ENCODE measurements at regions of chr13 and their contacts with region 1.

Region 1: DNA sequence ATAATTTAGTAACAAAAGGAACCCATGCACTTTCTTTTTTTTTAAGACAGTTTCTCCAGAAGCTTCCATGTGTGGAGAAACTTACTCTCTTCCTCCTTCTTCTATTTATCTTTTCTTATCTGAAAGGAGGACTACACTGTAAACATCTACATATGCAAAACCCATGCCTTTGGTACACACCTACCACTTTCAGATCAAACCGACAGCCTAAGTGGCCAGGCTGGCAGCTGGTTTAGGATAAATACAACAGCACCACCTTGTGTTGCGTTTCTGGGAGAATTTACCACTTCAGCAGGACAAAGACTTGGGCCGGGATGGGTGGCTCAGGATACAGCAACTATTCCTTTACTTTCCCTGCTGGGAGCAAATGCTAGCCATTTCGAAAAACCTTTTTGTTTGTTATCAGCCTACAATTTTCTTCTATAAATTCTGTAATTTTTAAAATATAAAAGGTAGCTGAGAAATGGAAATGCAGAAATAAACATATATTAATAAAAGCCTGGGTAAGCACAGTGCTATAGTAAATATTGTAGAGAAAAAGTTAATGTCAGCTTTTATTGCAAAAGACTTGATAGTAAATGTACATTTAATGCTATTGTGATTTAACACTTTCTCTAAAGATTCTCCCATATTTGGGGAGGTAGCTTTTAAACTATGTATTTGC is 94.0 kb upstream of the RFC3 start:
- DNase-seq: peak; percentile 94
- H3K4me3 ChIP-seq: no peak overlapping the region
- H3K27ac ChIP-seq: peak overlapping the region; percentile 57 to 67 (median 62)
- H3K4me1 ChIP-seq: peaks cover 37 to 45% (median 42%) of the 10 kb centered on the region in 4 donors
- H3K27me3 ChIP-seq: no peaks in the 10 kb centered on the region
- CTCF ChIP-seq: peak; percentile 71 to 83 (median 77)
- EP300 ChIP-seq: no peak
- POLR2A ChIP-seq: no peak

Region 2: DNA sequence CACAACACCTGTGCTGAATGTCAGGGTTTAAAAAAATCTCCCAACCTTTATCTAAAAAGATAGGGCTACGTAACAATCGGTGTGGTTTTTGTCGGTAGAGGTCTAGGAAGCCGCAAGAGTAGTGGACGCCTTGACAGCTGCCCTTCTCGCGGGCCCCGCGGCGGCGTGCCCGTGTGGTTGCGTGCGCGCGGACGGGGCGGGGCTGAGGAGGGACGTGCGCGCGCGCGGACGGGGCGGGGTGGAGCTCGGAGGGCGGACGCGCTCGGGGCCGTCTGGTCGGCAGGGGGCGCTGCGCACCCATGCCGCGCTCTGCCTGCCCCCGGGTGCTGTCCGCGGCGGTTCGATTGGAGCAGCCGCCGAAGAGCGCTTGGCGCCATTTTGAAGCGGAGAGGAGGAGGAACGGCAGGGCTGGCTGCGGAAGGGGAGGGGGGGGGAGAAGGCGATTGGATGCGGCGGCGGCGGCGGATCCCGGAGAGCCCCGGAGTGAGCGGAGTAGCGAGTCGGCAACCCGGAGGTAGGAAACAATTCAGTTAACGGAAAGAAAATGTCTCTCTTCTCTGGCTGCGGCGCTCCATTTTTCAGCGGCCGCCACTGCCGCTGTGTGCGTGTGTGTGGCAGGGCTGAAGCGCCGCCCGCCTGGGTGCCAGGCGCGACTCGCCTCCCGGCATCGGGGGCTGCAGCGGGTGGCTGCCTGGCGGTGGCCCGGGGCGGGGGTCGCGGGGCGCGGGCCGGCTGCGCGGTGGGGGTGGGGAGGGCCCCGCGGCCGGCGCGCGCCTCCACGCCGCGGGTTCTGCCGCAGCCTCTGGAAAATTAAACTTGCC is 1137.6 kb before region 1 on chr13 and contains the start of gene PDS5B:
- intact Hi-C with region 1: loop called (anchors 5 kb)
- DNase-seq: peak; percentile 98
- H3K4me3 ChIP-seq: peak within 1 kb of the TSS; percentile 76 to 96 (median 82)
- H3K27ac ChIP-seq: peak within 1 kb of the TSS; percentile 92 to 97 (median 94)
- H3K4me1 ChIP-seq: peaks cover 17 to 38% (median 36%) of the 10 kb centered on the region in 4 donors
- H3K27me3 ChIP-seq: no peaks in the 10 kb centered on the region
- CTCF ChIP-seq: peak in 2 of 3 experiments; percentile 95
- EP300 ChIP-seq: no peak
- POLR2A ChIP-seq: peak; percentile 22
- total RNA-seq, gene PDS5B: 33.1 to 58.6 (median 42.4) TPM

Region 3: DNA sequence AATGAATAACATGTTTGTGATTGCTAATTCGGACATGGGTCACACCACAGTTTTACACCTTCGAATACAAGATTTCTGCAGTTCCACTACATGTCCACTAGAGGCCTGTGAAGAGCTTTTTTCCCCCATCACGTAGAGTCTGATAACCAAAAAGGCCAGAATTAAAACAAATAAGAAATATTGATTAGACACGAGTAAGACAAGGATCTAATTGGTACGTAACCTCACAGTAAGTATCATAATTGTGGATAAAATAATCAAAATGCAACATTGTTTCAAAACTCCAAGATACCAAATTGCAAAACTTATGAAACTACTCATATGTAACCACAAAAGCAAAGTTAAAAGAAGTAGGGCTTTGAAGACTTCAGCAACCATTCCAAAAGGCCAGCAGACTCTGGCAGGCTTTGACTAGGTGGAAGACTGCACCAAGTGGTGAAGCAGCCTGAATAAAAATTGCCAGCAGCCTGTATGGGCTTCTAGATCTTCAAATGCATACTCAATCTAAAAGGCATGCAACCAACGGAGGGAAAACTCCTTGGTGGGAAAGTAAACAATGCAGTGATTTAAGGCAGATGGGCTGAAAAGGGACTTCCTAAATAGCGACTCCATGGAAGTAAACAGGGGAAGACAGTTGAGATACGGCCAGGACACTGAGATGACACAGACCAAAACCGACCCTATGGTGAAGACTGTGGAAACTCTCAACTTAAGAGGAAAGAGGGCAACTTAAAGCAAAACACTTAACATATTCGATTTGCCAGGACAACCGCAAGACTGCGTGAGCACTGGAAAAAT is 495.1 kb before region 1 on chr13:
- intact Hi-C with region 1: loop called (anchors 10 kb)
- DNase-seq: no peak
- H3K4me3 ChIP-seq: no peak overlapping the region
- H3K27ac ChIP-seq: peak overlapping the region; percentile 57 to 72 (median 64)
- H3K4me1 ChIP-seq: peaks cover 51 to 67% (median 67%) of the 10 kb centered on the region in 4 donors
- H3K27me3 ChIP-seq: no peaks in the 10 kb centered on the region
- CTCF ChIP-seq: peak; percentile 79 to 94 (median 88)
- EP300 ChIP-seq: no peak
- POLR2A ChIP-seq: no peak

Region 4: GRCh38 chr13:33367926-33368325 is 356.0 kb before region 1 on chr13:
- intact Hi-C with region 1: loop called (anchors 10 kb)
- DNase-seq: no peak
- H3K4me3 ChIP-seq: no peak overlapping the region
- H3K27ac ChIP-seq: no peak overlapping the region
- H3K4me1 ChIP-seq: peaks cover 0 to 4% (median 0%) of the 10 kb centered on the region in 4 donors
- H3K27me3 ChIP-seq: no peaks in the 10 kb centered on the region
- CTCF ChIP-seq: no peak
- EP300 ChIP-seq: no peak
- POLR2A ChIP-seq: no peak

Region 5: GRCh38 chr13:33542283-33543088 is 181.4 kb before region 1 on chr13:
- intact Hi-C with region 1: loop called (anchors 2 kb)
- DNase-seq: peak; percentile 100
- H3K4me3 ChIP-seq: peak overlapping the region; percentile 49 to 58 (median 57)
- H3K27ac ChIP-seq: peak overlapping the region; percentile 91 to 95 (median 92)
- H3K4me1 ChIP-seq: peaks cover 24 to 50% (median 40%) of the 10 kb centered on the region in 4 donors
- H3K27me3 ChIP-seq: no peaks in the 10 kb centered on the region
- CTCF ChIP-seq: peak; percentile 89 to 97 (median 90)
- EP300 ChIP-seq: peak; percentile 98
- POLR2A ChIP-seq: peak; percentile 16

Region 6: DNA sequence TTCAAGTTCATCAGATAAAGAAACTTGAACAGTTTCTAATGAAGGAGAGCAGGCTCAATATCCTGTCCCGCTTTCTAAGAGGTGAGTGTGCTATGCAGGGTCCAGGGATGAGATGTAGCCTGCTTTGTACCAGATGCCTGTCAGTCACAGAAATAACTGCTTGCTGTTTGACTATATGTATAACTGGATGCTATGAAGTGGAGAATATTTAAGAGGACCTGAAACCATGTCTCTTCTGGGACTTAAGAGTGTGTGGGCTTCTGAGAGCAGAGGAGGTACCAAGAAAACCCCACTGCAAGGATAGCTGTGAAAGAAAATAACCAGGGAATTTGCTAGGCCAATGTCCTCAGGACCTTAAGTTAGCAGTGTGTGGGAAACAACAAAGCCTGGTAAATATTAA is 152.3 kb before region 1 on chr13:
- intact Hi-C with region 1: no loop called
- DNase-seq: no peak
- H3K4me3 ChIP-seq: no peak overlapping the region
- H3K27ac ChIP-seq: no peak overlapping the region
- H3K4me1 ChIP-seq: peaks cover 0 to 5% (median under 1%) of the 10 kb centered on the region in 4 donors
- H3K27me3 ChIP-seq: no peaks in the 10 kb centered on the region
- CTCF ChIP-seq: no peak
- EP300 ChIP-seq: no peak
- POLR2A ChIP-seq: no peak

Region 7: DNA sequence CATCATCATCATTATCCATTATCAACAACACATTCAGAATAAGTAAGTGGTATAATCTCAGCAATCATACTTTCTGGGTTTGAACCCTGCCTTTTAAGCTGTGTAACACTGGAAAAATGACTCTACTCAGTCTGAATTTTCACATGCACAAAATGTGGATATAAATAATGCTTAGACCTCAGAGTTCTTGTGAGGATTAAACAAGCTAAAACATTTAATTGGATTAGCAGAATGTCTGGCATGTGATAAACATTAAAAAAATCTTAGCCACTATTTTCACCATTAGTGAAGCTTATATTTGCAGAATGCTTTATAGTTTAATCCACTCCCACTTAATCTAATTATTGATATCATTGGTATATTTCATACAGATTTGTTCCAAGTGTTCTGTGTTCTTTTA is 506.4 kb after region 1 on chr13:
- intact Hi-C with region 1: no loop called
- DNase-seq: no peak
- H3K4me3 ChIP-seq: no peak overlapping the region
- H3K27ac ChIP-seq: no peak overlapping the region
- H3K4me1 ChIP-seq: peaks cover 0 to 2% (median 0%) of the 10 kb centered on the region in 4 donors
- H3K27me3 ChIP-seq: no peaks in the 10 kb centered on the region
- CTCF ChIP-seq: no peak
- EP300 ChIP-seq: no peak
- POLR2A ChIP-seq: no peak